ENCODE measurements at regions of chr9 and their contacts with region 1.

Region 1: GRCh38 chr9:110156902-110157301 is 51.1 kb downstream of the C9orf152 start:
- DNase-seq: no peak
- ATAC-seq: peak; percentile 94
- H3K4me3 Mint-ChIP-seq: peak overlapping the region; percentile 55
- H3K27ac Mint-ChIP-seq: peak overlapping the region; percentile 88
- H3K4me1 Mint-ChIP-seq: peaks cover 68% of the 10 kb centered on the region
- H3K27me3 Mint-ChIP-seq: no peaks in the 10 kb centered on the region

Region 2: DNA sequence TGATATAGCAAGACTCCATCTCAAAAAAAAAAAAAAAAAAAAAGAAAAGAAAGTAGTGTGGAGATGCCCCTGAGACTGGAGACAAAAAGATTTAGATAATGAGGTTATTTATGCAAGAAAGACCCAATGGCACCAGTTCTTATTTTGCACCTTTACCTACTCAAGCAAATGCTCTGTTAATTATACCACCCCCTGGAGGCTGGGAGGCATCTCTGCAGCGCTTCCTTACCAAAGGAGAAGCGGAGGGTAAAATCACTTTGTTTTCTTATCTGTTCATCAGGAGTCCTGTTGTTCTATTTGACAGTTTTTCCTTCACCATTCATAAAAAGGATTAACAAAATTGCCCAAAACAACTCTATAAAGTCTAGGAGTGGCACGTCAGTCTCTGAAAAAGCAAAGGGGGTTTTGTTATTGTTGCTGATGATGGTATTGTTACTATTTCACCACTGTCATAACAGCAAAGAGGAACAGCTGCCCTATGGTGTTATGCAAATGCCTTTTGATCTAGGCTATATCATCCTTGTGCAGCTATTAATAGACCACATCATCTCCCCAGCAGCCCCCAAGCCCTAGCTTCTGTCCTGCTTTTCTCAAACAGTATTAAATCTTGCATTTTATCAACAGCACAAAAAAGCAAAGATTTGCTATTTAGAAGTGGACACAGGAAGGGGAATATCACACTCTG is 202.9 kb before region 1 on chr9:
- POLR2A ChIA-PET with region 1: no interaction called
- DNase-seq: no peak
- ATAC-seq: no peak
- H3K4me3 Mint-ChIP-seq: no peak overlapping the region
- H3K27ac Mint-ChIP-seq: no peak overlapping the region
- H3K4me1 Mint-ChIP-seq: peaks cover 10% of the 10 kb centered on the region
- H3K27me3 Mint-ChIP-seq: peaks cover 15% of the 10 kb centered on the region

Region 3: GRCh38 chr9:110133608-110134210 is 23.2 kb before region 1 on chr9:
- POLR2A ChIA-PET with region 1: no interaction called
- DNase-seq: no peak
- ATAC-seq: no peak
- H3K4me3 Mint-ChIP-seq: no peak overlapping the region
- H3K27ac Mint-ChIP-seq: no peak overlapping the region
- H3K4me1 Mint-ChIP-seq: no peaks in the 10 kb centered on the region
- H3K27me3 Mint-ChIP-seq: peaks cover 2% of the 10 kb centered on the region

Region 4: DNA sequence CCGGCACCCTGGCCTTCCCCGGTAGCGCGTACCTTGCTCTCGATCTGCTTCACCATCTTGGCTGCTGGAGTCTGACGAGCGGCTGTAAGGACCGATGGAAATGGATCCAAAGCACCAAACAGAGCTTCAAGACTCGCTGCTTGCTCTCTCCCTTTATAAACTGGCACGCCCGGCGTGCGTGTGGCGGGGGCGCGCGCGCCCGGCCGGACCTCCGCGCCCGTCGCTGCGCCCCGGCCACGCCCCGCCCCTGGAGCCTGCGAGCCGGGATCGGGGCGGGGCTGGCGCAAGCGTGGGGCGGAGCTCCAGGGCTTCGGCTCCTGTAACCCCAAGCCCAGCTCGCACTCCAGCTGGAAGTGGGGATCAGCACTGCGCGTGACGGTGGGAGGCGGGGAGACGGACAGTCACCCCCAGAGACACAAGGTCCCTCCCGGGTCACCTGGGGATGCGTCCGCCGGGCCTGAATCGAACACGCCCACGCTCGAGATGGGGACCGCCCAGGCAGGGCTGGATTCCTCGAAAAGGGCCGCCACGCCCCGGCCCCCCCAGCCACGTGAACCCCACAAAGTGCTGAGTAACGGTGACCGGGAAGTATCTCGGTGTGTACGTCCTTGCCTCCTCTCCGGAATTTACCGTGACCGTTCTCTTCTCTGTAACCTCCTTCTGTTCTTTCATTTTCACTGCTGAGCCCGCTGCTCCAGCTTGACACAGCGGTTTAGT is 99.6 kb after region 1 on chr9 and contains the start of gene TXN:
- POLR2A ChIA-PET with region 1: interaction called, 12 read pairs
- DNase-seq: peak; percentile 92
- ATAC-seq: peak; percentile 82
- H3K4me3 Mint-ChIP-seq: peak within 1 kb of the TSS; percentile 99
- H3K27ac Mint-ChIP-seq: peak within 1 kb of the TSS; percentile 99
- H3K4me1 Mint-ChIP-seq: peaks cover 27% of the 10 kb centered on the region
- H3K27me3 Mint-ChIP-seq: peaks cover 9% of the 10 kb centered on the region
- total RNA-seq, gene TXN: 135 to 141 TPM

Measured in activated naive CD8-positive, alpha-beta T cell treated with anti-CD3 and anti-CD28 coated beads, Interleukin-2, amount 10 ng/mL, durations not matched to agents 7 days and 5 days (primary cell).